Ovary (tissue), 10 donors: ENCODE measurements at regions of chr3 and their contacts with region 1.

Region 1: GRCh38 chr3:27659279-27660021 is 62.7 kb downstream of the EOMES start:
- DNase-seq: peak in 2 of 5 donors; percentile 42 to 52
- H3K4me3 ChIP-seq: no peak overlapping the region
- H3K27ac ChIP-seq: no peak overlapping the region
- H3K4me1 ChIP-seq: no peaks in the 10 kb centered on the region
- H3K27me3 ChIP-seq: no peaks in the 10 kb centered on the region
- CTCF ChIP-seq: peak in 1 of 3 donors; percentile 28
- EP300 ChIP-seq: no peak
- POLR2A ChIP-seq: no peak

Region 2: DNA sequence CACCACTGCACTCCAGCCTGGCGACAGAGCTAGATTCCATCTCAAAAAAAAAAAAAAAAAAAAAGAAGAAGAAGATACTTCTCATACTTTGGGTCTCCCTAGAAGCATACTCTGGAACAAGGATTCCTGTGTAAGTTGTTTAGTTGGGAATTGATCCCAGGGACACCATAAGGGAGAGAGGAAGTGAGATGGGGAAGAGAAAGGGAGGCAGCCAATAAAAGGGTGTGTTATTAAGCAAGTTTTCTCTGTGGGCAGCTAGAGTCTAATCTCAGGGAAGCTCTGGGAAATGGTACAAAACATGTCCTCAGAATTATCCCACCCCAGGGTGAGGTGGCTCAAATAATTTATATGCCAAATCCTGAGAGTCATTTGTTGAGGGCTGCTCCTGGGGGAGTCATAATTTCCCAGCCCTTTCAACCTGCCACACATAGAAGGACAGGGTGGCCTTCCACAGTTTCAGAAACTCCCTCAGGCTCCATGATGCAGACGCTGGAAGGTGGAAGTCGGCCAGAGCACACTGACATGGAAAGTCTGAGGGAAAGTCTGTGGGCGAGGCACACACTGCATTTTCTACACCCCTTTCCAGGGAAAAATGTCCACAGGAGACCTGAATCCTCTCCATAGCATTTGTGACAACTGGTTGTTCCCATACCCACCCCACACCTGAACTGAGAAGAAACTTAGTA is 88.9 kb before region 1 on chr3:
- intact Hi-C with region 1: loop called in 1 of 4 experiments (anchors 10 kb)
- DNase-seq: no peak
- H3K4me3 ChIP-seq: no peak overlapping the region
- H3K27ac ChIP-seq: no peak overlapping the region
- H3K4me1 ChIP-seq: peaks cover 2% of the 10 kb centered on the region
- H3K27me3 ChIP-seq: no peaks in the 10 kb centered on the region
- CTCF ChIP-seq: no peak
- EP300 ChIP-seq: no peak
- POLR2A ChIP-seq: no peak

Region 3: GRCh38 chr3:27607370-27607769 is 52.1 kb before region 1 on chr3:
- intact Hi-C with region 1: no loop called
- DNase-seq: no peak
- H3K4me3 ChIP-seq: no peak overlapping the region
- H3K27ac ChIP-seq: no peak overlapping the region
- H3K4me1 ChIP-seq: no peaks in the 10 kb centered on the region
- H3K27me3 ChIP-seq: no peaks in the 10 kb centered on the region
- CTCF ChIP-seq: no peak
- EP300 ChIP-seq: no peak
- POLR2A ChIP-seq: no peak